Ascending aorta (tissue), 2 donors: ENCODE measurements at regions of chr6 and their contacts with region 1.

Region 1: DNA sequence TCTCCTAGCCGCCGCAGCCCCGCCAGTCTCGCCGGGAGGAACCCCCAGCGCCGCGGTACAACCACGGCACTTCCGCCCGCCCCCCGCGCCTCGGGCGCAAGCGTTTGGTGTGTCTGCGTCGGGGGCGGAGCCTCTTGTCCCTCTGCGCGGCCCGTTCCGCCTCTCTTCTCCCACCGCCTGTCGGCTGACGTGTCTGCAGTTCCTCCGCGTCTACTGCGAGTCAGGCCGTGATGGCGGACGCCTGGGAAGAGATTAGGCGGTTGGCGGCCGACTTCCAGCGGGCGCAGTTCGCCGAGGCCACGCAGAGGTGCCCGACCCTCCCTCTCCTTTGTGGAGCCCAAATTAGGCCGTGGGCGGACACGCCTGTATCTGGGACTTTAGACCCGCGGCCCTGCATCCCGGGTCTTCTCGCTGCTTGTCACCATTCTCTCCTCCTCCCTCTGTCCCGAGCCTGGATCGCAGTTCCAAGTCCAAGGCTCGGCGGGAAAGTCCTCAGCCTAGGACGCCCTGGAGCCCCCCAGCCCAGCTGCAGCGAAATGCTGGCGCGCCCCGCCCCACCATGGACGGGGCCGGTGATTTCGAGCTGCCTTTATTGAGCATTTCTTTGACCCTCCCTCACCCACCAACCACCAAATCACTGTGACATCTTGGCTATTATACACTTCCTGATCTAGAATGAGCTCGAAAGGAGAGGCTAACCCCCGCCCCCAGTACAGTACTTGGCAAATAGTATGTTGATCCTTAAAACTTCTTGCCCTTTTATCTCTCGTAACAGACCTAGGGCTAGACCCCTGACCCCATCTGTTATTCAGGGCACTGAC is at the start of gene UFL1:
- DNase-seq: peak; percentile 84 to 97
- H3K4me3 ChIP-seq: peak within 1 kb of the TSS; percentile 76 to 89
- H3K27ac ChIP-seq: peak within 1 kb of the TSS; percentile 92 to 97
- H3K4me1 ChIP-seq: peaks cover 4 to 19% of the 10 kb centered on the region in 2 donors
- H3K27me3 ChIP-seq: no peaks in the 10 kb centered on the region
- CTCF ChIP-seq: peak in 1 of 3 experiments; percentile 23
- total RNA-seq, gene UFL1: 15.4 TPM

Region 2: DNA sequence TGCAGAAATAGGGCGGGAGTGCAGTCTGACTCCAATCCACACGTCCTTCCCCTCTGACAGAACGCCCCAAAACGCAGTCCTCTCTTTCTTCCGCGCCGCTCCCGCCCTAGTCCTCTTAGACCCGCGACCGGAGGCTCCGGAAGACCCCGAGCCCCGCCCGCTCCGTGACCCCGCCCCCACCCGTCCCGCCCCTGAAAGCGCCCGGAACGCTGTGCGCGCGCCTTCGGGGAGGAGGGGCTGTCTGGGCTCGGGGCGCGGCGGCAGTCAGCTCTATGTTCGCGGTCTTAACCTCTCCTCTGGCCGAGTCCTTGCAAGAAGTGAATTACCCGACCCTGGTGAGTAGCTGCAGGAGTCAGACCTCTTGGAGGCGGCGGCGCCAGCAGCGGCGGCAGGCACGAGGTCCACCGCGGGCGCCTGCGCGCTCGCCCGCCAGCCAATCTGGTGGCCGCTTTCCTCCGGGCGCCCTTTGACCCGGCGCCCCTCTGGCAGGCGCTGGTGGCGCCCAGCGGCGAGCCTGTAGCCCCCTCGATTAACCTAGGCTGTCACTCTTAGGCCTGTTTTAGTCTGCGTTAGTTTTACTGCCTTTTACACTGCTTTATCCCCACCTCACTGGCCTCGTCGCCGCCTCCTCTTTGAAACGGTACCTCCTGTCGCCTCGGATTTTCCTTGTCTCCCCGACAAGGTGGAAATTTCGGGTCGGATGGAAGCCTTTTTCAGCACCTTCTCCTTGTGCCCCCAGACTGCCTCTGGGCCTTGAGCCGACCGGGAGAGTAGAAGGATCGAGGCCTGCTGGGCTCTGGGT is 944.3 kb before region 1 on chr6 and contains the start of gene MANEA:
- intact Hi-C with region 1: loop called (anchors 10 kb)
- DNase-seq: peak; percentile 45 to 91
- H3K4me3 ChIP-seq: peak within 1 kb of the TSS; percentile 68 to 89
- H3K27ac ChIP-seq: peak within 1 kb of the TSS; percentile 94 to 95
- H3K4me1 ChIP-seq: peaks cover 0 to 18% of the 10 kb centered on the region in 2 donors
- H3K27me3 ChIP-seq: no peaks in the 10 kb centered on the region
- CTCF ChIP-seq: no peak
- total RNA-seq, gene MANEA: 1.9 TPM

Region 3: GRCh38 chr6:96837081-96837971 is 315.5 kb after region 1 on chr6 and contains the start of gene GPR63:
- intact Hi-C with region 1: loop called (anchors 5 kb)
- DNase-seq: peak in 1 of 2 donors; percentile 83
- H3K4me3 ChIP-seq: peak within 1 kb of the TSS; percentile 71 to 76
- H3K27ac ChIP-seq: peak within 1 kb of the TSS; percentile 31 to 54
- H3K4me1 ChIP-seq: peaks cover 0 to 4% of the 10 kb centered on the region in 2 donors
- H3K27me3 ChIP-seq: no peaks in the 10 kb centered on the region
- CTCF ChIP-seq: peak in 1 of 3 experiments; percentile 3
- total RNA-seq, gene GPR63: 0.85 TPM

Region 4: DNA sequence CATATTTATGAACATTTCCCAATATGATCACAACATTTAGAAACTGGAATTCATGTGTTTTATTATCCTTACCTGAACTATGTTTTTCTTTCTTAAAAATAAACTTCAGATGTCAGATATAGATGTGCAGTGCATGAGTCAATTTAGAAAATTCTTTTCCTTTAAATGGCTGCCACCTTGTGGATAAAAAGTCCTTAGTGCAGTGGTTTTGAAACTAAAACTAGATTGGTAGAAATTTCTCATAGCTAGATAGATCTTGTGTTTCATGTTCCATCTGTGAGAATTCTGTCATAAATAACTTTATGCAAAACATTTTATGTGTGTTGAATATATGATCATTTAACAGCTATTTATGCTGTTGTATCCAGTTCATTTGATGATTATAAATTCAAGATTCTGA is 537.6 kb after region 1 on chr6:
- intact Hi-C with region 1: loop called (anchors 10 kb)
- DNase-seq: no peak
- H3K4me3 ChIP-seq: no peak overlapping the region
- H3K27ac ChIP-seq: no peak overlapping the region
- H3K4me1 ChIP-seq: peaks cover 0 to 2% of the 10 kb centered on the region in 2 donors
- H3K27me3 ChIP-seq: no peaks in the 10 kb centered on the region
- CTCF ChIP-seq: peak in 2 of 3 experiments; percentile 45 to 58

Region 5: DNA sequence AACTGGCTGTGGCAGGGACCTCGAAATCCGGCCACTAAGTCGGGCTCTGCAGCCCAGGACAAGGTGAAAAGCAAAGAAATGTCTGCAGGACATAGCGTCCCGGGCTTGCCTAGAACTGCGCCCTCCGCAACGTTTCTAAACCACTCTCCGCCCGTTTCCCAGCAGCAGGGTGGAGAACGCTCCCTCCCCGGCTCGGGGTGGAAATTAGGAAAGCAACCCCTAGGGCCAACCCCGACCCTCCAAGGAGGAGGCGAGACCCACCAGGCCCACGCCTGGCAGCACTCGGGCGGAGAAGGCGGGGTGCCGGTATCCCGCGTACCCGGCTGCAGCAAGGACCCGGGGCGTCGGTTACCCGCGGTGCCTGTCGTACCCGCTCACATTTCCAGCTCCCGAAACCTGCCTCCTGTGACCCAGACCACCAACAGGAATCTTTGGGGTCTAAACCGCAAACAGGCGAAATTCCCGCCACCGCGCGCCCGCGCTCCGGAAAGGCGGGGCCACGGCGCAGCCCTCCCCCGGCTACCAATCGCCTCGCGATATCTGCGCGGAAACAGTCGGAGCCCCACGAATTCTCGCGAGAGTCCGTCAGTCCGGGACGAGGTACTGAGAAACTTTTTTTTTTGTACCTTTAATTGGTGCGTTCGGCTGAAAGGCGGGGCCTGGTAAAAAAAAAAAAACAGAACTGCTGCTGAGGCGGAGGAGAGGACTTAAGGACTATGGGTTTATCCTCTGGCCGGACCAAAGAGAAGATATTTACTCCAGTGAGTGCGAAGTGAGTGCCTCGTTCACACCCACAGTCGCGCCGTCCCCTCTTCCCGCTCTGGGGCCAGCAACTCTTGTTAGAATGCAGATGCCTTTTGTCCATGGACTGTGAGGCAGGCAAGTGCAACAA is 761.1 kb after region 1 on chr6 and contains the start of gene MMS22L:
- intact Hi-C with region 1: loop called (anchors 2 kb)
- DNase-seq: peak; percentile 73 to 96
- H3K4me3 ChIP-seq: peak within 1 kb of the TSS; percentile 93 to 98
- H3K27ac ChIP-seq: peak within 1 kb of the TSS; percentile 50 to 58
- H3K4me1 ChIP-seq: peaks cover 0 to 4% of the 10 kb centered on the region in 2 donors
- H3K27me3 ChIP-seq: no peaks in the 10 kb centered on the region
- CTCF ChIP-seq: no peak
- total RNA-seq, gene MMS22L: 21.9 TPM